MCF 10A (cell line): ENCODE measurements at regions of chr11 and their contacts with region 1.

Region 1: DNA sequence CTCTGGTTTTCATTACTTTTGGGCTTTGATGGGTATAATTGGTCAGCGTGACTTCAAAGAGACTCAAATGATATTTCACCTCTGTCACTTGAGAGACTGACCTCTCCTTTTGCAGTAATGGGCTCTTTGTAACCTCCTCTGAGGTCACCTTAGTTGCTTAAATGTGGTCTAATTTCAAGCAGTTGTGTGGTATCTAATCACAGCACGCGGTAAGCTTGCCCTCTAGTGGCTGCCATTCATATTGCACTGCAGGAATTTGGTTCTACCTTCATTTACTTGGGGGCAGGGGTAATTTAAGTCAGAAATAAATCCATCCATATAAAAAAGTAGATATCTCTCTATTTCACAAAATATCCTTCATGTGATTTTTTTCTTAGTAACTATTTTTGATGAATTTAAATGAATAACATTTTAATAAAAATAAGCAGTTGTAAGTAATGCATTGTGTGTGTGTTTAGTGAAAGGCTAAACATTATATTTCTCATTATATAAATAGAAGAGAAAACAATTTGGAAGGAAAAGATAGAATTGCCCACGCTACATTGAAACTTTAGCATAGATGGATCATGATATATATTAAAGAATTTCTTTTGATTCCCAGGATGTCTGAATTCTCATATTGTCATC is 55.0 kb upstream of the ANO3 start:
- DNase-seq: peak; percentile 66
- H3K4me3 Mint-ChIP-seq: no peak overlapping the region
- H3K27ac Mint-ChIP-seq: no peak overlapping the region
- H3K4me1 Mint-ChIP-seq: no peaks in the 10 kb centered on the region
- H3K27me3 Mint-ChIP-seq: peaks cover 72% of the 10 kb centered on the region
- CTCF ChIP-seq: peak; percentile 93

Region 2: DNA sequence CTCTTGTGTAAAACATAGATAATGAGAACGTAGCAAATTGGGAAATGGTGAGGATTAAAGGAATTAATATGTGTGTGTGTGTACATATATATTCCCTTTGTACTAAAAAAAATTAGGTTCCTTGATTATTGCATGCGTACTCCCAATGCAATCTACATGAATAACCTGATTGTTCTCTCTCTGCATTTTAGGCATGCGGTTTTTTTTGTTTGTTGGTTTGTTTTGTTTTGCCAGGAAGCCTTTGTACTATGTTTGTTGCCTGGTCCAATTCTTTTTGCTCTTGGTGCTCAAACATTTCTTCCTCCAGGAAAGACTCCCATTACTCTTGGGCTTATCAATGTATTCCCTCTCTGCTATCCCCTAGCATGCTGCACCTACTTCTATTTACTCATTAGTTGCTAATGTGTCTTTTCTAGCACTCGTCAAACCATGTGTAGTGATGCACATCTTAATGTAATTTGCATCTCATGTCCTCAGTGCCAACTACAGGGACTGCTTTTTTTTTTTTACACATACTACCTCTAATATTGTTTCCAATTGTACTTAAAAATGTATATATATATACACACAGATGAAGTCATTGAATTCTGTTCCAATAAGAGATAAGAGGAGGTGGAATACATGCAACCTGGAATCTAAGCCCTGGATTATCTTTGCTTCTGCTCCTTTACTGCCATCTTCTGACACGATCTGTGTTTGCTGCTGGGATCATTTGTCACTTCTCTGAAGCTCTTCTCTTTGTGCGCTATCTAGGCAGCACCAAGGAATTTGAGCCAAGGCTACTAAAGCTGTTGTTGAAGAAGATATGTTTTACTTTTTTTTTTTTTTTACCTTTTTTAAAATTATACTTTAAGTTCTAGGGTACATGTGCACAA is 142.2 kb before region 1 on chr11:
- CTCF ChIA-PET with region 1: no interaction called
- POLR2A ChIA-PET with region 1: no interaction called
- intact Hi-C with region 1: loop called (anchors 5 kb)
- DNase-seq: peak; percentile 11
- H3K4me3 Mint-ChIP-seq: no peak overlapping the region
- H3K27ac Mint-ChIP-seq: no peak overlapping the region
- H3K4me1 Mint-ChIP-seq: no peaks in the 10 kb centered on the region
- H3K27me3 Mint-ChIP-seq: peaks cover 67% of the 10 kb centered on the region
- CTCF ChIP-seq: peak; percentile 8

Region 3: DNA sequence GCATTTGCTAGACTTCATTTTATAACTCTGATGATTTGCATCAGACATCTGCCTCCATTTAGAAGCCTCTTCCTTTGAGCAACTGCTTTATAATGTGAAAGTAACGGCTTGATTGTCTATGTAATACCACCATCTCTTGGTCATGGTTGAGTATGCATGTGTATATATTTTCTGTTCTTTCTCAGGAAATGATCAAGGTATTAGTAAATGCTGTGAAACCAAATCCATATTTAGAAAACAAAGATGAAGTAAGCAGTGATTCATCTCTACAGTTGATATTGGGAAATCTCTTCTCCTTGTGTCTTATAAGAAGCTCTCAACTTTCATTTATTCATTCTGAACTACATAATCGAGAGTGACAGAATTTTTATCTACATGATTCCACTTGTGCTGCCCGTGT is 49.6 kb before region 1 on chr11:
- CTCF ChIA-PET with region 1: interaction called, 3 read pairs
- POLR2A ChIA-PET with region 1: no interaction called
- intact Hi-C with region 1: loop called (anchors 1 kb)
- DNase-seq: peak; percentile 78
- H3K4me3 Mint-ChIP-seq: no peak overlapping the region
- H3K27ac Mint-ChIP-seq: no peak overlapping the region
- H3K4me1 Mint-ChIP-seq: peaks cover 11% of the 10 kb centered on the region
- H3K27me3 Mint-ChIP-seq: no peaks in the 10 kb centered on the region
- CTCF ChIP-seq: peak; percentile 53

Region 4: GRCh38 chr11:26243426-26243825 is 33.5 kb before region 1 on chr11:
- CTCF ChIA-PET with region 1: no interaction called
- POLR2A ChIA-PET with region 1: no interaction called
- intact Hi-C with region 1: no loop called
- DNase-seq: no peak
- H3K4me3 Mint-ChIP-seq: no peak overlapping the region
- H3K27ac Mint-ChIP-seq: no peak overlapping the region
- H3K4me1 Mint-ChIP-seq: no peaks in the 10 kb centered on the region
- H3K27me3 Mint-ChIP-seq: peaks cover 58% of the 10 kb centered on the region
- CTCF ChIP-seq: no peak

Region 5: DNA sequence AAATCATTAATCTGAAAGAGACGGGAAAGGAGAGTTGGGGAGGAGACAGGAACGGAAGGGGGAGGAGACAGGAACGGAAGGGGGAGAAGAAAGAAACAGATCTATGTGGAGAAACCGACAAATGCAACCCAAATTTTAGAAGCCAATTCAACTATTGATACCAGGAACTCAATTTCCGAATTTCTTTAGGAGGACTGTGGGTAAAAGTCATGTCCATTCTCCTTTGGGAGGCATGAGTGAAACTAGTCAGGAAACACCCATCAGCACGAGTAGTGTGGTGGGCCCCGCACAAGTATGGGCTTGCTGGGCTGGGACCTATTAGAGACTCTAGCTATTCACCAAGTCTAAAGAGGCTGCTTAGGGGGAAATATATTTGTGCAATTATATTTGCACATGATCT is 73.1 kb after region 1 on chr11:
- CTCF ChIA-PET with region 1: no interaction called
- POLR2A ChIA-PET with region 1: no interaction called
- intact Hi-C with region 1: no loop called
- DNase-seq: no peak
- H3K4me3 Mint-ChIP-seq: no peak overlapping the region
- H3K27ac Mint-ChIP-seq: no peak overlapping the region
- H3K4me1 Mint-ChIP-seq: no peaks in the 10 kb centered on the region
- H3K27me3 Mint-ChIP-seq: peaks cover 25% of the 10 kb centered on the region
- CTCF ChIP-seq: no peak